WTC11 (cell line): ENCODE measurements at regions of chr5 and their contacts with region 1.

Region 1: GRCh38 chr5:179747811-179748210 is 15.2 kb downstream of the MAML1 start:
- DNase-seq: no peak
- ATAC-seq: no peak
- H3K4me3 Mint-ChIP-seq: no peak overlapping the region
- H3K27ac Mint-ChIP-seq: no peak overlapping the region
- H3K4me1 Mint-ChIP-seq: no peaks in the 10 kb centered on the region; the same call in 1 of the 2 replicates
- H3K27me3 Mint-ChIP-seq: no peaks in the 10 kb centered on the region
- CTCF ChIP-seq: no peak

Region 2: DNA sequence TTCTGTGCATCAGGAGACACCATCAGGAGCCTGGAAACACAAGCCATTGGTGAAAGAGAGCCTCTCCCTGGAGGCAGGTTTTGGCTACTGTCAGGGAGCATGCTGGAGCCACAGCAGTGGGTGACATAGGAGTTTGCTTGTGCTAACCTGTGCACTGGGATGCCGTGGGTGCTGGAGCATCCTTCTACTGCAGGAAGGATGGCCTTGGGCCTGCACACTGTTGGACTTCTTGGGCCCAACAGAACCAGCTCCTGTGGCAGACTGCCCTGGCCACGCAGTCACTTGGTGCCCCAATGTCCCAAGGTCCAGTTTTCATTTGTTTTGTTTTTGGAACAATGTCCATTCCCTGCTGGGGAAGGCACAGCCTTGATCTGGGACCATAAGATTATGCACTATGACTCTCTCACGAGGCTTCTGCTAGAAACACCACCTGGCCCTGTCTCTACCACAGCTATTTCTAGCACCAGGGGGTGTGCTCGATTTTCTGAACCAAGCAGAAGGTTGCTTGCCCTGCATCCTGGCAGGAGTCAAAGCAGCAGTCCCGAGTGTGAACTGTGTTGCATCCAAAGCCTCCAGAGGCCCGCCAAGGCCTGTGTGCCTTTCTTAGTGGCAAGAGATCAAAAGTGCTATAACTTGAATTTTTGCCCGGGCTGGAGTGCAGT is 40.5 kb after region 1 on chr5:
- CTCF ChIA-PET with region 1: no interaction called
- POLR2A ChIA-PET with region 1: no interaction called
- DNase-seq: no peak
- ATAC-seq: no peak
- H3K4me3 Mint-ChIP-seq: no peak overlapping the region
- H3K27ac Mint-ChIP-seq: no peak overlapping the region
- H3K4me1 Mint-ChIP-seq: peaks cover 4% of the 10 kb centered on the region
- H3K27me3 Mint-ChIP-seq: peaks cover 2% of the 10 kb centered on the region; the same call in 1 of the 2 replicates
- CTCF ChIP-seq: no peak

Region 3: DNA sequence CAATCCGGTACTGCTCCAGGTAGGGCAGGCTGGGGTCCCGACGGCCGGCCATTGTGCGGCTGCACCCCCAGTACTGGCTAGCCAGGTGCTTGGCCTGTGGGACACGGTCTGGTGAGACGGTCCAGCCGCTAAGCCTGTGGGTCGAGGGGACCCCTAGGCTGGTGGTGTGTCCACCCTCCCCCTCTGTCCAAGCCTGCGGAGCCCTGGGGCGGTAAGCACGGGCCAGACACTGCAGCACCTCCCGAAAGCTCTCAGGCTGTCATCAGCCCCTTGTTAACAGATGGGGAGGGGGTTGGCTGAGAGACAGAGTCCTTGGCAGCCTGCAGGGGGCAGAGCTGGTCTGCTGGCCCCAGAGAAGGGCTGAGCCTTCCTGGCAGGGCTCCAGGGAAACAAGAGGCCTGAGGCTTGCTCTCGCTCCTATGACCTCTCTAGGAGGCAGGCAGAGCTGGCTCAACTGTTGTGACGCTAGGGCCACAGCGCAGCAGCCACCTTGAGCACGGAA is 122.6 kb after region 1 on chr5:
- CTCF ChIA-PET with region 1: no interaction called
- POLR2A ChIA-PET with region 1: interaction called, 11 read pairs
- DNase-seq: no peak
- ATAC-seq: peak; percentile 40
- H3K4me3 Mint-ChIP-seq: no peak overlapping the region
- H3K27ac Mint-ChIP-seq: peak overlapping the region; percentile 70
- H3K4me1 Mint-ChIP-seq: peaks cover 2% of the 10 kb centered on the region; the same call in 1 of the 2 replicates
- H3K27me3 Mint-ChIP-seq: no peaks in the 10 kb centered on the region
- CTCF ChIP-seq: no peak